ENCODE measurements at regions of chr20 and their contacts with region 1.

Region 1: DNA sequence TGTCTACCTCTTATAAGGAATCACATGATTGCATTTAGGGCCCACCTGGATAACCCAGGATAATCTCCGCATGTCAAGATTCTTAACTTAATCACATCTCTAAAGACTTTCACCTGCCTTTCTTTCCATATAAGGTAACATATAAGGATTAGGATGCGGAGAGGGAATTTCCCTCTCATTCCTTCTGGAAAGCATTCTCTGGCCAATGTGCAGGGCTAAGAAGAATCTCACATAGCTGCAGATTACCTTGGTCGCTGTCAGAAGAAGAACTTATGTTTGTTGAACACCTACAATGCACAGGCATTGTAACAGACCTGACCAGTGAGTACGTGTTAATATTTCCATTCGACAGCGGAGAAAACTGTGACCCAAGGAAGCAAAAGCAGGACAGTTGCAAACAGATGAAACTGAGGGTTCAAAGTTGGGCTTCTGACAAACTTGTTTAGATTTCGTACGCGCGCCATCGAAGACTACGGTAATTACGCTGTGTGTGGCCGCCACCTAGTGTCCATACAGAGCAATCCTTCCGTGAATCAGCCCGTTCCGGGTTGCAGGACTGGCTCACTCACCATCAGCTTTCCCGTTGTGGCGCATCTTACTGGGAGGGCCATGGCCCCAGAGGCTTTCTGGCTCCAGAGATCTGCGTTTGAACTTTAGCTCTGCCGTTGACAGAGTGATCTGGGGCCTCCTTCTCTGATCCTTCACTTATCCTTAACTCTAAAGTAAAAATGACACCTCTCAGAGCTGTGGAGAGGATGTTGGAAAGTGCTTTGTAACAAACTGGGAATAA is 9.5 kb downstream of the C20orf202 start:
- DNase-seq: peak; percentile 78 to 79
- H3K4me3 ChIP-seq: no peak overlapping the region
- H3K4me3 Mint-ChIP-seq: no peak overlapping the region
- H3K27ac Mint-ChIP-seq: no peak overlapping the region
- H3K4me1 ChIP-seq: 0 out of 2 replicates have a peak, but pooled peaks cover 3% of the 10 kb centered on the region
- H3K4me1 Mint-ChIP-seq: no peaks in the 10 kb centered on the region
- H3K27me3 ChIP-seq: no peaks in the 10 kb centered on the region
- H3K27me3 Mint-ChIP-seq: peaks cover 7% of the 10 kb centered on the region
- CTCF ChIP-seq: peak; percentile 83 to 86

Region 2: DNA sequence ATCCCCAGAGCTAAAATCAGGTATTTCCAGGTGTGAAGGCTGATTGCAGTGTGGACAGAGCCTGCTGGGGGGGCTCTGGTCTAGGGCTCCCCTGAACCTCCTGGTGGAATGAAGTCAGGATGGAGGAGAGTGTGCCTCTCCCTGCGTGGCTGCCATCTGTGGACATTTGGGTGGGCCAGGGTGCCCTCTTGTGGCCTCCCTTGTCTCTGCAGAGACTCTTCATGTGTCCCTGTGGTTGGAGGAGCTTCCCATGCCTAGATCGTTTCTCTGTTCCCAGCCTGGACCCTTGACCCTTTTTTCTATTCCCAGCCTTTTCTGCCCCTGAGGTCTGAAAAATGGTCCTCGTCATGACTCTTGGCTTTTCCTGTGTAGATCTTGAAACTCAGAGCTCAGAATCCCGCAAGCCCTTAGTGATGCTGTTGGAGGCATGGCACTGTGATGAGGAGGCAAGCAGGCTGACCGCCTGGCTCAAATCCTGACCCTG is 104.3 kb before region 1 on chr20:
- CTCF ChIA-PET with region 1: interaction called, 6 read pairs
- POLR2A ChIA-PET with region 1: no interaction called
- intact Hi-C with region 1: loop called (anchors 2 kb)
- DNase-seq: peak; percentile 59 to 68
- H3K4me3 ChIP-seq: no peak overlapping the region
- H3K4me3 Mint-ChIP-seq: no peak overlapping the region
- H3K27ac Mint-ChIP-seq: no peak overlapping the region
- H3K4me1 ChIP-seq: no peaks in the 10 kb centered on the region
- H3K4me1 Mint-ChIP-seq: no peaks in the 10 kb centered on the region
- H3K27me3 ChIP-seq: no peaks in the 10 kb centered on the region
- H3K27me3 Mint-ChIP-seq: peaks cover 11% of the 10 kb centered on the region
- CTCF ChIP-seq: peak; percentile 86

Region 3: DNA sequence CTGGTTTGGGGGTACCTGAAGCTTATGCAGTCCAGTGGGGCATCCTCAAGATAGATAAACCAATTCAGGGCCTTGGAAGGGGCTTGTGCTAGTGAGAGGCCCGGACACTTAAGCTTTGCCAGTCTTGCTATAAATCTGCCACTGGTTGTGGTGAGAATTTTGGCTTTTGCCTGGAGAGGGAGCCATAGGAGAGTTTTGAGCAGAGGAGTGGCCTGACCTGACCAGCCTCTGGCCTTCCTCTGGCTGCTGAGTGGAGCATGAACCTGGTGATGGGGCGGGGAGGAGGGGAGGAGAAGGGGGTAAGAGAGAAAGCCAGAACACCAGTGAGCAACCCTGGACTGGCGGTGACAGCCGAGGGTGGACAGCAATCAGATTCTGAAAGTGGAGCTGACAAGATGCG is 35.1 kb before region 1 on chr20:
- CTCF ChIA-PET with region 1: interaction called, 4 read pairs
- POLR2A ChIA-PET with region 1: no interaction called
- intact Hi-C with region 1: loop called (anchors 1 kb)
- DNase-seq: peak in 1 of 2 experiments; percentile 56
- H3K4me3 ChIP-seq: no peak overlapping the region
- H3K4me3 Mint-ChIP-seq: no peak overlapping the region
- H3K27ac Mint-ChIP-seq: no peak overlapping the region
- H3K4me1 ChIP-seq: no peaks in the 10 kb centered on the region
- H3K4me1 Mint-ChIP-seq: no peaks in the 10 kb centered on the region
- H3K27me3 ChIP-seq: no peaks in the 10 kb centered on the region
- H3K27me3 Mint-ChIP-seq: no peaks in the 10 kb centered on the region
- CTCF ChIP-seq: peak; percentile 19 to 50

Region 4: GRCh38 chr20:1291191-1291741 is 78.5 kb after region 1 on chr20:
- CTCF ChIA-PET with region 1: no interaction called
- POLR2A ChIA-PET with region 1: no interaction called
- intact Hi-C with region 1: no loop called
- DNase-seq: no peak
- H3K4me3 ChIP-seq: no peak overlapping the region
- H3K4me3 Mint-ChIP-seq: no peak overlapping the region
- H3K27ac Mint-ChIP-seq: no peak overlapping the region
- H3K4me1 ChIP-seq: no peaks in the 10 kb centered on the region
- H3K4me1 Mint-ChIP-seq: no peaks in the 10 kb centered on the region
- H3K27me3 ChIP-seq: 0 out of 2 replicates have a peak, but pooled peaks cover 2% of the 10 kb centered on the region
- H3K27me3 Mint-ChIP-seq: peaks cover 11% of the 10 kb centered on the region
- CTCF ChIP-seq: no peak

Region 5: GRCh38 chr20:1644101-1644962 is 431.5 kb after region 1 on chr20:
- CTCF ChIA-PET with region 1: no interaction called
- POLR2A ChIA-PET with region 1: no interaction called
- intact Hi-C with region 1: no loop called
- DNase-seq: no peak
- H3K4me3 ChIP-seq: no peak overlapping the region
- H3K4me3 Mint-ChIP-seq: no peak overlapping the region
- H3K27ac Mint-ChIP-seq: no peak overlapping the region
- H3K4me1 ChIP-seq: no peaks in the 10 kb centered on the region
- H3K4me1 Mint-ChIP-seq: no peaks in the 10 kb centered on the region
- H3K27me3 ChIP-seq: no peaks in the 10 kb centered on the region
- H3K27me3 Mint-ChIP-seq: peaks cover 3% of the 10 kb centered on the region
- CTCF ChIP-seq: no peak

Measured in Caco-2 (cell line).